GM12878 (cell line): ENCODE measurements at regions of chr19 and their contacts with region 1.

Region 1: GRCh38 chr19:17859533-17860330 is at the start of gene RPL18A:
- DNase-seq: peak; percentile 99
- ATAC-seq: peak; percentile 93
- H3K4me3 ChIP-seq: peak within 1 kb of the TSS; percentile 92
- H3K27ac ChIP-seq: peak within 1 kb of the TSS; percentile 90
- H3K4me1 ChIP-seq: peaks cover 12% of the 10 kb centered on the region
- H3K27me3 ChIP-seq: no peaks in the 10 kb centered on the region
- CTCF ChIP-seq: peak; percentile 93 to 99 (median 98); a peak in 5 of 6 replicates
- EP300 ChIP-seq: no peak
- POLR2A ChIP-seq: peak; percentile 100
- RAD21 ChIP-seq: peak; percentile 82
- polyA plus RNA-seq, gene RPL18A: 1,658 to 1,675 TPM

Region 2: GRCh38 chr19:17448131-17448967 is 411.4 kb before region 1 on chr19 and contains the start of gene TMEM221:
- CTCF ChIA-PET with region 1: no interaction called
- POLR2A ChIA-PET with region 1: no interaction called
- RAD21 ChIA-PET with region 1: no interaction called
- SMC1A ChIA-PET with region 1: no interaction called
- in situ Hi-C with region 1: no loop called
- intact Hi-C with region 1: loop called (anchors 10 kb)
- DNase-seq: no peak
- ATAC-seq: peak; percentile 80
- H3K4me3 ChIP-seq: no peak within 1 kb of the TSS
- H3K27ac ChIP-seq: no peak within 1 kb of the TSS
- H3K4me1 ChIP-seq: peaks cover 11% of the 10 kb centered on the region
- H3K27me3 ChIP-seq: peaks cover 2 to 5% of the 10 kb centered on the region in 2 experiments; a peak in 3 of 4 replicates
- CTCF ChIP-seq: peak; percentile 28 to 40 (median 40); a peak in 4 of 6 replicates
- EP300 ChIP-seq: no peak
- POLR2A ChIP-seq: no peak
- RAD21 ChIP-seq: no peak
- polyA plus RNA-seq, gene TMEM221: 0.04 TPM in 1 of 2 experiments, not detected in the other

Region 3: DNA sequence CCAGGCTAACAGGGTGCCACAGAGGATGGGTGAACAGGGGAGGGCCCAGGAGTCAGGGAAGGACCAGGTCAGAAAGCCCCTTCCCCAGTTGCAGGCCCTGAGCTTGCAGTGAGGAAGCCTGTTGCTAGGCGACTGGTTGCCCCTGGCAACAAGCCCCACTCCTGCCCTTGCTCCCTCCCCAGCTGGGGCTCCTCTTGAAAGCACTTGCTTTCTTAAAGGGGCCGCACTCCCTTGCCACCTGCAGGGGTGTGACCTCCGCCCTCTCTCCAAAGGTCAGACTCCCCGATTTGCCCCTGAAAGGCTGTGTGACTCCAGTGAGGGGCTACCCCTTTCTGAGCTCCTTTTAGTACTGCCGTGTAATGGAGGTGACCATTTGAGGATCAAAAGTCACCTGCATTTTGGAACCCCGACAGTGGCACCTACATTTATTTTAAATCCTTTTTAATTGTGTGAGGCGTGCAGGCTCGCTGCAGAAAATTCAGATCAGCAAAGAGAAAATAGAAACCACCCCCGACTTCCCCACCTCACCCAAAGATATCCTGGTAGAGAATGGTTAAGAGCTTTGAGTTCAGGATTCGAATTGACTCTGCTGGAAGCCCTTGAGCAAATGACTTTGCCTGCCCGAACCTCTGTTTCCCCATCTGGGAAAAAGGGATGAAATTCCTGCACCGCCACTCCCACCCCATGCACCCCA is 103.6 kb before region 1 on chr19:
- CTCF ChIA-PET with region 1: interaction called, 14 read pairs
- POLR2A ChIA-PET with region 1: interaction called, 5 read pairs
- RAD21 ChIA-PET with region 1: interaction called, 7 read pairs
- SMC1A ChIA-PET with region 1: interaction called, 7 read pairs
- in situ Hi-C with region 1: no loop called
- intact Hi-C with region 1: no loop called
- DNase-seq: peak; percentile 37
- ATAC-seq: peak; percentile 45
- H3K4me3 ChIP-seq: peak overlapping the region; percentile 69
- H3K27ac ChIP-seq: peak overlapping the region; percentile 66
- H3K4me1 ChIP-seq: peaks cover 61% of the 10 kb centered on the region
- H3K27me3 ChIP-seq: no peaks in the 10 kb centered on the region
- CTCF ChIP-seq: no peak
- EP300 ChIP-seq: no peak
- POLR2A ChIP-seq: no peak
- RAD21 ChIP-seq: no peak

Region 4: GRCh38 chr19:17847538-17848366 is 12.0 kb before region 1 on chr19 and contains the start of gene JAK3:
- CTCF ChIA-PET with region 1: interaction called, 40 read pairs
- POLR2A ChIA-PET with region 1: interaction called, 23 read pairs
- RAD21 ChIA-PET with region 1: interaction called, 56 read pairs
- SMC1A ChIA-PET with region 1: interaction called, 19 read pairs
- in situ Hi-C with region 1: no loop called
- intact Hi-C with region 1: no loop called
- DNase-seq: peak; percentile 77
- ATAC-seq: peak; percentile 93
- H3K4me3 ChIP-seq: peak within 1 kb of the TSS; percentile 72
- H3K27ac ChIP-seq: peak within 1 kb of the TSS; percentile 71
- H3K4me1 ChIP-seq: peaks cover 36% of the 10 kb centered on the region
- H3K27me3 ChIP-seq: no peaks in the 10 kb centered on the region
- CTCF ChIP-seq: no peak
- EP300 ChIP-seq: peak; percentile 14 to 77; a peak in 2 of 4 replicates
- POLR2A ChIP-seq: peak; percentile 93
- RAD21 ChIP-seq: no peak
- polyA plus RNA-seq, gene JAK3: 7.8 to 37.2 TPM

Region 5: GRCh38 chr19:17932485-17933338 is 73.0 kb after region 1 on chr19 and contains the start of gene CCDC124:
- CTCF ChIA-PET with region 1: interaction called, 251 read pairs
- POLR2A ChIA-PET with region 1: interaction called, 65 read pairs
- RAD21 ChIA-PET with region 1: interaction called, 228 read pairs
- SMC1A ChIA-PET with region 1: interaction called, 137 read pairs
- in situ Hi-C with region 1: no loop called
- intact Hi-C with region 1: loop called (anchors 1 kb)
- DNase-seq: peak; percentile 78
- ATAC-seq: peak; percentile 95
- H3K4me3 ChIP-seq: peak within 1 kb of the TSS; percentile 90
- H3K27ac ChIP-seq: peak within 1 kb of the TSS; percentile 89
- H3K4me1 ChIP-seq: peaks cover 26% of the 10 kb centered on the region
- H3K27me3 ChIP-seq: no peaks in the 10 kb centered on the region
- CTCF ChIP-seq: peak; percentile 99
- EP300 ChIP-seq: 0 out of 4 replicates have a peak, but pooled peaks of 1 of the 2 experiments have one; percentile 2
- POLR2A ChIP-seq: peak; percentile 91
- RAD21 ChIP-seq: peak; percentile 97
- polyA plus RNA-seq, gene CCDC124: 3.7 to 16.1 TPM

Region 6: DNA sequence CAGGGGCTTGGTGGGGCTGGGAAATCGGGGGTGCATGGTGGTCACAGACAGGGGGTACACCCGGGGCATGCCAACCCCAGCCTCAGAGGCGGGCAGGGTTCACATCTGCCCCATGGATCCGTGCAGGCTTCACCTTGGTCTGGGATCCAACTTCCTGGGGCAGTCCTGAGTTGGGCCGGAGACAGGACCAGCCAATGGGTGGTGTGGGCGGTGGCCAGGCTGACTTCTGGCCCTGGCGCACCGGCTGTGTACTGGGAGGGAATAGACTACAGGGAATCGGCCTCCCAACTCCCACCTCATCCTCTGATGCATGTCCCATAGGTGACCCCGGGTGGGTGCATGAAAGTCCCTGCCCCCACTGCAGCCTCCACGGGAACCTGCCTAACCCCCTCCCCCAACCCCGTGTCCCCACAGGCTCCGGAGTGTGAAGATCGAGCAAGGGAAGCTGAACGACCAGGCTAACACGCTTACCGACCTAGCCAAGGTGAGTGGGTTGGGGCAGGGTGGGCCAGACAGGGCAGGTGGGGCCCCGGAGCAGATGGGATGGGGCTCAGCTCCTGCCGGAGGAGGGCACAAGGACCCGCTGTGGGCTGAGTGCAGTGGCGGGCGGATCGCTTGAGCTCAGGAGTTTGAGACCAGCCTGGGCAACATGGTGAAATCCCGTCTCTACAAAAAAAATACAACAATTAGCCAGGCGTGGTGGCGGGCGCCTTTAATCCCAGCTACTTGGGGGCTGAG is 133.5 kb after region 1 on chr19:
- CTCF ChIA-PET with region 1: interaction called, 14 read pairs
- POLR2A ChIA-PET with region 1: no interaction called
- RAD21 ChIA-PET with region 1: interaction called, 9 read pairs
- SMC1A ChIA-PET with region 1: interaction called, 3 read pairs
- in situ Hi-C with region 1: no loop called
- intact Hi-C with region 1: loop called (anchors 2 kb)
- DNase-seq: no peak
- ATAC-seq: no peak
- H3K4me3 ChIP-seq: no peak overlapping the region
- H3K27ac ChIP-seq: no peak overlapping the region
- H3K4me1 ChIP-seq: no peaks in the 10 kb centered on the region; the same call in 1 of the 2 replicates
- H3K27me3 ChIP-seq: no peaks in the 10 kb centered on the region
- CTCF ChIP-seq: no peak
- EP300 ChIP-seq: no peak
- POLR2A ChIP-seq: no peak
- RAD21 ChIP-seq: no peak

Region 7: DNA sequence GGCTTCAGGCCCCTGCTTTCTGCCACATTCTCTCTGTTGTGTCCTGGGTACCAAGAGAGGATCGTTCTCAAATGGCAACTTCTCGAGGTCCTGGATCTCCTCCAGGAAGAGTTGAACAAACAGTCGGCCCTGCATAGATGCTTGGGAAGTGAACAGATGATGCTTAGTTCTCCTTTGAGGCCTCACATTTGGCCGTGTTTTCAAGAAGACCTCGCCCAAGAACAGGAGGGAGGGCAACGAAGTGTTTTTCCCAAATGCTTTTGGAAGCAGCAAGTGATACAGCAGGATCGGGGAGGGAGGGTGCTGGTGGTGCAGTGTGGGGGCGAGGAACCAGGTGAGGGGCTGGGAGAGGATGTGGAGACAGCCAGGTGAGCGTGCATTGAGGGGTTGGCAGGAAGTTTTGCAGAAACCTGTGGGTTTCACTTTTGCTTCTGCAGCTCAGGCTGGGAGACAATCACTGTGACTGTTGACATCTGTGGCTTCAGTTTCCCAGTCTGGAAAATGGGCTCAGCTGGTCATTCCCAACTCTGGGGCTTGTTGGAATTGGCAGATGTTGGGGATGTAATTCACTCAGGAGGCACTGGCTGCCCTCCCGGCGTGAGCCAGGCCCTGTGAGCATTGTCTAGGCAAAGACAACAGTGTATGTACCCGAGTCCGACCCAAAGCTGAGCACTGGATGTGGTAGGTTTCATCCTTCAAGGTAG is 259.4 kb after region 1 on chr19:
- CTCF ChIA-PET with region 1: no interaction called
- POLR2A ChIA-PET with region 1: interaction called, 12 read pairs
- RAD21 ChIA-PET with region 1: no interaction called
- SMC1A ChIA-PET with region 1: no interaction called
- in situ Hi-C with region 1: no loop called
- intact Hi-C with region 1: no loop called
- DNase-seq: no peak
- ATAC-seq: peak; percentile 61
- H3K4me3 ChIP-seq: peak overlapping the region; percentile 88; the same call in 1 of the 2 replicates
- H3K27ac ChIP-seq: peak overlapping the region; percentile 63
- H3K4me1 ChIP-seq: peaks cover 24% of the 10 kb centered on the region
- H3K27me3 ChIP-seq: no peaks in the 10 kb centered on the region
- CTCF ChIP-seq: no peak
- EP300 ChIP-seq: no peak
- POLR2A ChIP-seq: no peak; the same call in 1 of the 2 replicates
- RAD21 ChIP-seq: no peak